Aorta (tissue), 5 donors: ENCODE measurements at regions of chr16 and their contacts with region 1.

Region 1: GRCh38 chr16:76653390-76654026 is 376.3 kb downstream of the CNTNAP4 start:
- DNase-seq: no peak
- ATAC-seq: no peak
- H3K4me3 ChIP-seq: no peak overlapping the region
- H3K27ac ChIP-seq: no peak overlapping the region
- H3K4me1 ChIP-seq: no peaks in the 10 kb centered on the region
- H3K27me3 ChIP-seq: no peaks in the 10 kb centered on the region

Region 2: GRCh38 chr16:76713191-76713590 is 59.7 kb after region 1 on chr16:
- intact Hi-C with region 1: loop called in 1 of 2 experiments (anchors 10 kb)
- DNase-seq: no peak
- ATAC-seq: no peak
- H3K4me3 ChIP-seq: no peak overlapping the region
- H3K27ac ChIP-seq: no peak overlapping the region
- H3K4me1 ChIP-seq: no peaks in the 10 kb centered on the region
- H3K27me3 ChIP-seq: no peaks in the 10 kb centered on the region